BJ (cell line): ENCODE measurements at regions of chr21 and their contacts with region 1.

Region 1: DNA sequence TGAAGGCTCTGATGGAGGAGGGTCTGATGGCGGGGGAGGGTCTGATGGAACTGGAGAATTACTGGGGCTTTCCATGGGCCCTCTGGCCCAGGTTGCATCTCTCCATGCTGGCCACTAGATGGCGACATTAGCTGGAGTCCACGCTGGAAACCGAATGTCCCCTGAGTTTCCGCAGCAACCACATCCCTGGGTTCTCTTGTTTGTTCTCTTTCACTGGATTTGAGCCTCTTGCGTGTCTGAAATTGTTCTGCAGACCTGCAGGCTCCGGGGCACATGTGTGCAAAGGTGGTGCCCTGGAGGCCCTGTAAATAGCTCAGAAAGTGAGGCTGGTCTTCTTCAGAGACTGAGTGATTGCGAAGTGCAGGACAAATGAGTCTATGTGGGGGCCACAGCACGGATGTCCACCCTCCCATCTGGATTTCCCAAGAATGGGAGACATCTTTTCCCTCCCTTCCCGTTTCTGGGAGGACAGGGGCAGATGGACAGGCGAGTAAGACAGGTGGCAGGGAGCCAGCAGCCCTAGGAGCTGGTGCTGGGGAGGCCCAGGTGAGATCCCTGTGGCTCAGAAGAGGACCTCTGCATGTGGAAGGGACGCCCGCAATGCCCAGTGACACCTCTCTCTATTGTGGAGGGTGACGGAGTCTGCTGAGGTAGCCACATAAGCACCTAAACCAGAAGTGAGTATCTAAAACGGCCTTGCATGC is 73.2 kb upstream of the ABCG1 start:
- DNase-seq: no peak
- H3K4me3 ChIP-seq: no peak overlapping the region
- H3K27me3 ChIP-seq: 0 out of 2 replicates have a peak, but pooled peaks cover 2% of the 10 kb centered on the region
- CTCF ChIP-seq: peak; percentile 91

Region 2: DNA sequence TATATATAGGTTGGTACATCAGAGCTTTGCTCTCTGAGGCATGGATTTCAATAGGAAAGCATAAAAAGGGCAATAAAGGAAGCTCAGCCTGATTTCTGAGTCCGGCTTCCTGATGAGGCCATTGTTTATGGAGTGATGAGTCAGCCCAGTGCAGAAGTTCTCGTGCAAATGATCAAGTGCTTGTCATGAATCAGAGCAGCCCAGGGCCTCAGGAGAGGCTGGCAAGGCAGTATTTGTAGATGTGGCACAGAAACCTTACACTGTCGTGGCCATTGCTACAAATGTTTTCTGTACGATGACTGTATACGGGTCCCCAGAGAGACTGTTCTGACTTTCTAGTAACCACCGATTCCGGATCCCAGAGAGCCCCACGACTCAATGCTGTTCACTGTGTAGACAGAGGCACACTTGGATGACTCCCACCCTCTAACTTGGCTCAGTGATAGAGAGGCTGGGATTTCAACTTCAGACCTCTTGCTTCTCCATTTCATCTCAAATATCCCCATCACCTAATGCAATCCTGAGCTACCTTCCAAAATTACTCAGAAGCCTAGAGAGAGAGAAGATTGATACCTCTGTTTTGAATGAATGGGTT is 47.8 kb before region 1 on chr21:
- CTCF ChIA-PET with region 1: no interaction called
- POLR2A ChIA-PET with region 1: no interaction called
- DNase-seq: peak; percentile 91
- H3K4me3 ChIP-seq: no peak overlapping the region
- H3K27me3 ChIP-seq: no peaks in the 10 kb centered on the region
- CTCF ChIP-seq: no peak

Region 3: GRCh38 chr21:42129300-42130266 is 16.1 kb before region 1 on chr21:
- CTCF ChIA-PET with region 1: interaction called, 11 read pairs
- POLR2A ChIA-PET with region 1: no interaction called
- DNase-seq: no peak
- H3K4me3 ChIP-seq: no peak overlapping the region
- H3K27me3 ChIP-seq: peaks cover 4% of the 10 kb centered on the region; the same call in 1 of the 2 replicates
- CTCF ChIP-seq: no peak

Region 4: DNA sequence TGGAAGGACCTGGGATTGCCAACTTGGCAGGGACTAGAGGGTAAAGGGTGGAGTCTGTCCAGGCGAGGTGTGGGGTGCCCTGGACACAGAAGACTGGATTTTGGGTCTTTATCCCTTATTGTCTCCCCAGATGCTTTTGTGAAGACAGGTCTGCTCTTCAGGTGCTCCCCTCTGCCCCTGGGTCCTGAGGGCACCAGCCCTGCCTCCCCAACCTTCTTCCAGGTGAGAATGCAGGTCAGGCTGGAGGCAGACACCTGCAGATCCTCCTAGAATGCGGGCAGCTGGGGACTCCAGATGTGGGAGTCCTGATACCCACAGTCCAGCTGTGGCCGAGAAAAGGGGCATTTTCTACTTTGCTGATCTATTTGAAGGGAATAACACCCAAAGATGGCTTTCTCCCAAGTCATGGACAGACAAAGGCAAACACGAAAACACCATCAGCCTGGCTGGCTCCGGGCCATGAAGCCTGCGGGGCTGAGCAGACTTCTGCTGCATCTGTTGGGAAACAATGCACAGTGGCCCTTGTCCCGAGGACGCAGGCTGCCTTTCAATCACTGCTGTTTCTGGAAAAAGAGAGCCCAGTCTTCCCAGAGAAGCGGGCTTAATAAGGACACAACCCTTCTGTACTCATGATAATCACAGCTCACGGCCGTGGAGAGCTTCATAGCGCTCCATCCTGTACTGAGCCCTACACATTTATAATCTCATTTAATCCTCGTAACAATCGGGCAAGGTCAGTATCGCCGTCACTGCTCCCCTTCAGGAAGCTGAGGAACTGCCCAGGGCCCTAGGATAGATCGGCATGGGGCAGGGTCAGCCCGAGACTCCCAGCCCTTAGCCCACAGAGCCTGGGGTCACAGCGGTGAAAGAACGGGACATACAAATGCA is 11.2 kb after region 1 on chr21:
- CTCF ChIA-PET with region 1: interaction called, 17 read pairs
- POLR2A ChIA-PET with region 1: no interaction called
- DNase-seq: no peak
- H3K4me3 ChIP-seq: no peak overlapping the region
- H3K27me3 ChIP-seq: peaks cover 8% of the 10 kb centered on the region
- CTCF ChIP-seq: no peak

Region 5: DNA sequence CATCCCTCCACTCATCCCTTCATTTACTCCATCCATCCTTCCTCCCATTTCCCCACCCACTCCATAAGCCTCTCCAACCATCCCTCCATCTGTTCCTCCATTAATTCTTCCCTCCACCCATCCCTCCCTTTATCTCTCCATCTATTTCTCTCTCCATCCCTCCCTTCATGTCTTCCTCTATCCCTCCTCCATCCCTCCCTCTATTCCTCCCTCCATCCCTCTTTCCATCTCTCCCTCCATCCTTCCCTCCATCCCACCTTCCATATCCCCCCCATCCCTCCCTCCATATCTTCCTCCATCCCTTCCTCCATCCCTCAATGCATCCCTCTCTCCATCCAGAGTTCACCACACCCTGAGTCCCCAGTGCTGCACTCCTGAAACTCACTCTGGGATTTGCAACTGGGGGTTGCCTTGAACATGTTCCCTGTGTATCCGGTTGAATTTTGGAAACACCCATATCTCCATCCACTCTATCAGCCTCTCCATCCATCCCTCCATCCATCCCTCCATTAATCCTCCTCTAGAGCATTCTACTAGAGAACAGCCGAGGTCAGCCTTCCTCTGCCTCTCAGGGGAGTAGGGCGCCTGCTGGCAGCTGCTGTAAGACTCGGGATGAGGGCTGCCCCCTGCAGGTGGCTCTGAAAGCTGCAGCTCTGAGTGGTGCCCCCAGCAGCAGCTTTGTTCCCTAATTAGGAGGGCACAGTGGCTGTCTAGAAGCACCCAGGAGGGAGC is 112.6 kb after region 1 on chr21:
- CTCF ChIA-PET with region 1: interaction called, 143 read pairs
- POLR2A ChIA-PET with region 1: no interaction called
- DNase-seq: no peak
- H3K4me3 ChIP-seq: no peak overlapping the region
- H3K27me3 ChIP-seq: no peaks in the 10 kb centered on the region; the same call in none of the 2 replicates
- CTCF ChIP-seq: peak; percentile 87

Region 6: DNA sequence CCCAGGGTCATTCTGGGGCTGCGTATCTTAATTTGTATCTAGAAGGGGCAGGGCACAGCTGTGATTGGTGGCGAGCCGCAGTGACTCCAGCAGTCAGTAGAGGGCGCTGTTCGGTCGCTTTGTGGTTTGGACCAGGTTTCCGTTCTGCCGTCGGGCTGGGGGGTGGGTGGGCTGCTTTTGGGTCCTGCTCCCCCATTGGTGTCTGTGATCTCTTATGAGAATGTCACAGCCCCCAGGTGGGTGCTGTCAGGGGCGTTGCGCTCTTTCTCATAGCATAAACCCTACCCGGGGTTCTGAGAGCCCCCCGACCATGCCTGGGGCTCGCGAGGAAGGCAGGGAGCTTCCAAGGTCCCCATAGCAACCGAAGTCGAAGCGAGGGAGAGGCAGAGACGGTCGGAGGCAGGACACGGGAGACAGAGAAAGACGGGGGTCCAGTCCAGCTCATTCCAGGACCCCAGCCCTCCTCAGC is 164.1 kb after region 1 on chr21:
- CTCF ChIA-PET with region 1: interaction called, 13 read pairs
- POLR2A ChIA-PET with region 1: no interaction called
- DNase-seq: no peak
- H3K4me3 ChIP-seq: no peak overlapping the region
- H3K27me3 ChIP-seq: peaks cover 5% of the 10 kb centered on the region; the same call in 1 of the 2 replicates
- CTCF ChIP-seq: peak; percentile 69

Region 7: DNA sequence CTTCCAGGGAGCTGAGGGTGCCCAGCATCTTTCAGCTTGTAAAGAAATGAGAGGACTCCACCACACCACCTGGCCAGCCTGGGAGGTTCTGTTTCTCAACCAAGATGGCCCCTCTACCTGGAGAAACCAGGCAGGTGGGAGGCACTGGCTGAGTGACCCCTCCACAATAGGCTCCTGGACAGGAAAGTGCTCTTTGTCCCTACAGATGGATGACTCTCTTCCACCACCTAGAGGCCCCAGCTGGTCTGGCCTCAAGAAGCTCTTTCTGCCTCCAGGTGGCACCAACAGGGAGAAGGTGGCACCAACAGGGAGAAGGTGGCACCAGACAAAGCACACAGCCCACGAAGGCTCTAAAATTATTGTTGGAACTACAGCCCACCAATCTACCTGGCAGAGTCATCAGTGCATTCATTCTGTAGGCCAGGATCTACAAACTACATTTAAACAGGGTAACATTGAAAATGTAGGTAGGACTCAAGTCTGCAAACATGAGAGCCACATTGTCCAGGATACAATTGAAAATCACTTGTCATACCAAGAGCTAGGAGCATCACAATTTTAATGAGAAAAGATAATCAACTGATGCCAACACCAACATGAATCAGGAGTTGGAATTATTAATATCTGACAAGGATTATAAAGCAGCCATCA is 235.7 kb after region 1 on chr21:
- CTCF ChIA-PET with region 1: interaction called, 11 read pairs
- POLR2A ChIA-PET with region 1: no interaction called
- DNase-seq: no peak
- H3K4me3 ChIP-seq: no peak overlapping the region
- H3K27me3 ChIP-seq: no peaks in the 10 kb centered on the region
- CTCF ChIP-seq: peak; percentile 61